ENCODE measurements at regions of chr18 and their contacts with region 1.

Region 1: DNA sequence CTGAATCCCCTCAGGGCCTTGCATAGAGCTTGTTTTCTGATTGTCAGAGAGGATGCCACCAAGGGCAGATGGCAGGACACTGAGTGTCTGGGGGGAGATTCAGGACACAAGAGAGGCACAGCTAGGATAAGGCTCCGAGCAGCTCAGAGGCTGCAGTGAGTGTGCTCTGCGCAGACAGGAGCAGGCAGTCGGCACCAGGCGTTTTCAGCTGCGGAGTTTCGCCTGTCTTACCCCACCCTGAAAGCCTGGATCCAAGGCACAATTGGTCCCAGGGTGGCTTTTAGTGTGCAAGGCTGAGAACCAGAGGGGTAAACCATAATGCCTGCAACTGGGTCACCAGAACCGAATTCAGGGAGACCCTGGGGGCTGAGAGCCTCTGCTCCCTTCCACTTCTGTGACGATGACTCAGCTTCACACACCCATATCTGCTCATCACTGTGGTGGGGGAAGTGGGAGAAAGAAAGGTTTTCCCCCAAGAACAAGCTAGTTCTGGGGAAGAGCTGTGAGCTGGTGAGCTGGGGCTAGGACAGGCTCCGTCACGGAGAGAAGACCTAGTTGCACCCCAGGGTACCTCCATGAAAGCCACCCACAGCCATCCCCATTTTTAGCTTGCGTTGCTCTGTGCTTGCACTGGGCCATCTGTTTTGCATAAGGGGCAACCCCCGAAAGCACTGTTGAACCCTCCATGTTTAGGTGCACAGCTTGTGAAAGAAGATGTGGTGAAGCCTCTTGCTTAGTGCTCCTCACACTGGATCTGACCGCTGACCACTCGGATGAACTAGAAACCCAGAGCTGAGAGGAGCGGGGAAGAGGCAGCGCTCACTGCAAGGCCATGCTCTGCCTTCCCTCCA is 173.7 kb downstream of the CELF4 start:
- DNase-seq: no peak
- H3K4me3 ChIP-seq: no peak overlapping the region
- H3K27ac ChIP-seq: no peak overlapping the region
- H3K4me1 ChIP-seq: peaks cover 0 to 17% (median 14%) of the 10 kb centered on the region in 4 experiments; a peak in 6 of 7 replicates
- H3K27me3 ChIP-seq: peaks cover 4 to 40% (median 27%) of the 10 kb centered on the region in 4 experiments
- CTCF ChIP-seq: no peak
- EP300 ChIP-seq: no peak
- POLR2A ChIP-seq: no peak
- RAD21 ChIP-seq: no peak

Region 2: GRCh38 chr18:36912887-36913286 is 479.0 kb before region 1 on chr18:
- CTCF ChIA-PET with region 1: no interaction called
- POLR2A ChIA-PET with region 1: no interaction called
- DNase-seq: no peak
- H3K4me3 ChIP-seq: no peak overlapping the region
- H3K27ac ChIP-seq: no peak overlapping the region
- H3K4me1 ChIP-seq: no peaks in the 10 kb centered on the region
- H3K27me3 ChIP-seq: no peaks in the 10 kb centered on the region
- CTCF ChIP-seq: no peak
- EP300 ChIP-seq: no peak
- POLR2A ChIP-seq: no peak
- RAD21 ChIP-seq: no peak

Region 3: DNA sequence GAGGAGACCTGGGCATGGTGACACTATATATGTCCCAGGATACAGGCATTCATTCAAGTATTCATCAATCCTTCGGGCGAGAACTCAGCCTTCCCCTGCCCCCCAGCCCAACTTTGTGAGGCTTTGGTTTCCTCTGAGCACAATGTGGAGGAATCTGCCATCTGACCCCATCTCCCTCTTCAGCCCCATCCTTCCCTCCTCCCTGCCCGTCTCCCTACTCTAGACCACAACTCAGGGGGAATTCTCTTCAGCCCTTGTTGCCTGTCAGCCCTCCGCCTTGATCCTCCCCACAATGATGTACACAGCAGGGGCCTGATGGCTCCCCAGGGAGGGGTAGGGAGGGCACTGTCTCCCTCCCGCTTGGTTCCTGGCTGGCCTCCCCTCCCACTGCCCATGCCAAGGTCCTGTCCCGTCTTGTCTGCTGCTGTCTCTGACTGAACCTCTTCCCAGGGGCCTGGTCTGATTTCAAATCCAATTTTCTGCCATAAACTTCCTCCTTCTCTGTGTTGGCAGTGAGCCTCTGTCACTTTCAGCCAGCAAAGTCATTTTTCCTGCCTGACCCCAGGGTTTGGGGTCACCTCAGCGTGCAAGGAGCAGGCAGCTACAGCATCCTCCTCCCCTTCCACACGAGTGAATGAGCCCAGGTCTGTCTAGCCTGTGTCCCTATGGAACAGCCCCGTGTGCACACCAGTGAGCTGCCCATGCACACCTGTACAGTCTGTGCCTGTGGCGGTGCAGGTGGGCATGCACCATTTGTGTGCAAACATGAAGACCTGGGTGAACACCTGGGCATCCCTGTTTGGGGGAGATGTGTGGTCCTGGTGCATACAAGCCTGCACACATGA is 23.6 kb before region 1 on chr18:
- CTCF ChIA-PET with region 1: no interaction called
- POLR2A ChIA-PET with region 1: no interaction called
- DNase-seq: no peak
- H3K4me3 ChIP-seq: no peak overlapping the region
- H3K27ac ChIP-seq: no peak overlapping the region
- H3K4me1 ChIP-seq: peaks cover 0 to 13% (median 6%) of the 10 kb centered on the region in 4 experiments; a peak in 6 of 7 replicates
- H3K27me3 ChIP-seq: peaks cover 11 to 30% (median 24%) of the 10 kb centered on the region in 4 experiments
- CTCF ChIP-seq: no peak
- EP300 ChIP-seq: no peak
- POLR2A ChIP-seq: no peak
- RAD21 ChIP-seq: no peak

Region 4: GRCh38 chr18:37430357-37431076 is 38.6 kb after region 1 on chr18:
- CTCF ChIA-PET with region 1: interaction called, 10 read pairs
- POLR2A ChIA-PET with region 1: no interaction called
- DNase-seq: peak; percentile 27 to 60
- H3K4me3 ChIP-seq: no peak overlapping the region
- H3K27ac ChIP-seq: no peak overlapping the region
- H3K4me1 ChIP-seq: peaks cover 0 to 5% (median 3%) of the 10 kb centered on the region in 4 experiments; a peak in 4 of 7 replicates
- H3K27me3 ChIP-seq: no peaks in the 10 kb centered on the region
- CTCF ChIP-seq: peak; percentile 47 to 62 (median 56)
- EP300 ChIP-seq: no peak
- POLR2A ChIP-seq: no peak
- RAD21 ChIP-seq: peak; percentile 67 to 68